Testis (tissue), 5 donors: ENCODE measurements at regions of chr10 and their contacts with region 1.

Region 1: GRCh38 chr10:71771821-71772617 is 1.3 kb downstream of the VSIR start:
- DNase-seq: peak; percentile 50
- H3K4me3 ChIP-seq: peak overlapping the region; percentile 54 to 63
- H3K27ac ChIP-seq: peak overlapping the region; percentile 79 to 82
- H3K4me1 ChIP-seq: peaks cover 48% of the 10 kb centered on the region
- H3K27me3 ChIP-seq: no peaks in the 10 kb centered on the region
- CTCF ChIP-seq: no peak
- POLR2A ChIP-seq: no peak

Region 2: GRCh38 chr10:71527135-71527534 is 244.9 kb before region 1 on chr10:
- intact Hi-C with region 1: no loop called
- DNase-seq: peak; percentile 92
- H3K4me3 ChIP-seq: no peak overlapping the region
- H3K27ac ChIP-seq: no peak overlapping the region
- H3K4me1 ChIP-seq: peaks cover 12% of the 10 kb centered on the region
- H3K27me3 ChIP-seq: no peaks in the 10 kb centered on the region
- CTCF ChIP-seq: no peak
- POLR2A ChIP-seq: no peak

Region 3: DNA sequence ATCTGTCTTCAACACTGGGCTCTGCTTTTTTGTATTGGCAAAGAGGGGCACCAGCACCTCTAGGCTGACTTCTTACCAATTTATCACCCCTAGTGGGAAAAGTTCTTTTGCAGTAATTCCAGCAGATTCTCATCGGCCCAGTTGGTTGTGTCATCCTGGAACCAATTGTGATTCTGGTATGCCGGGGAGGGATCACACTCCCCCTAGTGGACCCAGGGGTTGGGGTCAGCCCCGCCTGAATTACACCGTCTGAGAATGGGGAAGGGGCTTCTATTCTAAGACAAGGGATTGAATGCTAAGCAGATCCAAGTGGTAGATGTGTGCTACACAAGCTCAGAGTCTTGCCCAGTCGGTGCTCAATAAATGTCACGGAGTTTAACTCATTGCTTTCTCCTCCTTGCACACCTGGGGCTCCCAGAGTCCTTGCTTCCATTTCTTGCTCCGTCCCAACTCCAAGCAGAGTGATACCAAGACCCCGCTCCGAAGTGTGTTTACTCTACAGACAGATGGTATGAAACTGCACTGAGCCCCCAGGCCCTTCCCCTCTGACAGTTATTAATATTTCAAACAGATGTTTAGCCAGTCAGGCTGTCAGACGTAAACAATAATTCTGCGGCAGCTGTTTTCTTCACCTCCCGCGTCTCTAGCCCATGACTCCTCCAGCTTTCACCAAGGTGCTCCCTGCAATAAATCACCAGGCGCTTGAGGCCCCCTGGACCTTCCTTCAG is 124.3 kb before region 1 on chr10:
- intact Hi-C with region 1: no loop called
- DNase-seq: no peak
- H3K4me3 ChIP-seq: no peak overlapping the region
- H3K27ac ChIP-seq: no peak overlapping the region
- H3K4me1 ChIP-seq: no peaks in the 10 kb centered on the region
- H3K27me3 ChIP-seq: no peaks in the 10 kb centered on the region
- CTCF ChIP-seq: peak in 1 of 3 experiments; percentile 13
- POLR2A ChIP-seq: no peak

Region 4: DNA sequence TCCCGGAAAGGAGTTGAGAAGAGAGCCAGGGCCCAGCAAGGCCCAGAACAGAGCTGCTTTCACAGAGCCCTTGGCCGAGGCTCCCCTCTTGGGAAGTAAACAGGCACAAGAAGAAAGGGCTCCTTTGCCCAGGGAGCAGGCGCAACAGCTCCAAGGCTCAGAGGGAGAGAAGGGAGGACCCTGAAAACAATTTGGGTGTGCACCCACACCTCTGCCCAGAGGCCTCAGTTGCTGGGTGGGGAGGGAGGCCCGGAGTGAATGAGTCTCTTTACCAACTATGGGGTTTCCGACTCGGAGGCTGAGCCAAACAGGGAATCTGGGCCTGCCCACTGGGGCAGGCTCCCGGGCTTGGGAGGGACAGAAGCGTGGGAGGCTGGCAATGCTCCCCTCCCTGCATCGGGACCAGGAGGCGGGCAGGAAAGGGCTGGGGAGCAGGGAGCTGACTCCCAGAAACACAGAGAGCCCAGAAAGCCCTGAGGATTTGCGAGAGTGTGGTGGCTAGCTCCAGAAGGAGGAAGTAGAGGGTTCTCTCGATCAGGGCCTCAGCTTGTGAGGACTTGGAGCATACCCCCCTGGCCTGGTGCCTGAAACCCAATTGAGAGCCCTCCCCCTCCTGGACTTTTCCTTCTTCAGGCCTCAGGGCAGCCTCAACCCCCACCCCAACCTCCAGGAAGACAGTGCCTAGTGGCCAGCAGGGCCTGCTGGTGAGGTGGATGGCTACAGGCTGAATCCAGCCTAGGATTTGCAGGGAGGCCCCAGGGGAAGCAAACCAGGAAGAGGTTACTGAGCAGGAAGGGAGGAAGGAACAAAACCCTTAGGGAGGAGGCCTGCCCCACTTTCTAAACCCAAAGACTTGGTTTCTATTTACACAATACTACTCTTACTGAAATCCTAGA is 58.6 kb before region 1 on chr10:
- intact Hi-C with region 1: loop called (anchors 10 kb)
- DNase-seq: peak; percentile 80
- H3K4me3 ChIP-seq: no peak overlapping the region
- H3K27ac ChIP-seq: peak overlapping the region; percentile 74 to 83
- H3K4me1 ChIP-seq: peaks cover 38% of the 10 kb centered on the region
- H3K27me3 ChIP-seq: no peaks in the 10 kb centered on the region
- CTCF ChIP-seq: no peak
- POLR2A ChIP-seq: no peak

Region 5: DNA sequence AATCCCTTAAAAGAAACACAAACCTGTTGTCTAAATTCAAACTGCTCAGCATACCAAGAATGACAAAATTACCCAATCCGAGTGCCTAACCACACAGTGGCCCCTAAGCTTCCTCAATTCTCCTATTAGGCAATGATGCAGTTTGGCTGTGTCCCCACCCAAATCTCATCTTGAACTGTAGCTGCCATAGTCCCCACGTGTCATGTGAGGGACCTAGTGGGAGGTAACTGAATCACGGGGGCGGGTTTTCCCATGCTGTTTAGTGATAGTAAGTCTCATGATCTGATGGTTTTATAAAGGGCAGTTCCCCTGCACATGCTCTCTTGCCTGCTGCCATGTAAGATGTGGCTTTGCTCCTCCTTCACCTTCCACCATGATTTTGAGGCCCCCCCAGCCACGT is 57.2 kb after region 1 on chr10:
- intact Hi-C with region 1: no loop called
- DNase-seq: no peak
- H3K4me3 ChIP-seq: no peak overlapping the region
- H3K27ac ChIP-seq: no peak overlapping the region
- H3K4me1 ChIP-seq: no peaks in the 10 kb centered on the region
- H3K27me3 ChIP-seq: no peaks in the 10 kb centered on the region
- CTCF ChIP-seq: no peak
- POLR2A ChIP-seq: no peak

Region 6: DNA sequence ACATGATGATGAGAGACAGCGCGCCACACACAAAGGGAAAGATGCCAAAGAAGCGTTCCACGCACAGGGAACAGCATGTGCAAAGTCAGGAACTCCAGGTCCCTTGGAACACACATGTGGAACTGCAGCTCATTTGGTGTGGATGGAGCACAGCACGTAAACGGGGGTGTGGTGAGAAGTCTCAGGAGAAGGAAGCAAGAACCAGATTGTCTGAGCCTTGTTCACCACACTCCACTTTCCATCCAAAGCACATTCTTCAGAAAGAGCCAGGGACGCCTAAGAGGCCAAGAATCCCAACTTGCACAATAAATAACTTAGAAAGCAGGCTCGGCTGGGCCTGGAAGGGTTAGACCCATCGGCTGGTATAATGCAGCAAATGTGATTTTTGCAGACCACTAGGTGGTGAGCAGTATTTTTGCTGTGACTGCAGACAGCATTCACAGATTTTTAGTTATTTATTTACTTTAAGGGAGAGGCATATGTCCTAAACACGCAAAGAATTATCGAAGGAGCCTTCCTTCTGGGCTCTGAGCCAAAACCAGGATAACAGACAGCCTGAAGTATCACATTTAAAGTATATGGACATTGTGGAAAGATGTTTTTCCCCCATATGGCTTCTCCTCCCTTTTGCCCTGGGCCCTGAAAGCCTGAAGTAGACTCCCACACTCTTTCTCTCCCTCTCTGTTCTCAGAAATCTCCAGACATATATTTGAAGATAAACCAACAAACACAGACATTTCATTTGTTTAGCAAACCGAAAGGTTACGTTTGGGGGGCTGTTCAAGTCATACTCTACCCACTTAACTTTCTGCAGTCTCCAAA is 472.0 kb after region 1 on chr10:
- intact Hi-C with region 1: no loop called
- DNase-seq: peak; percentile 65
- H3K4me3 ChIP-seq: no peak overlapping the region
- H3K27ac ChIP-seq: peak overlapping the region; percentile 73 to 90
- H3K4me1 ChIP-seq: peaks cover 71% of the 10 kb centered on the region
- H3K27me3 ChIP-seq: no peaks in the 10 kb centered on the region
- CTCF ChIP-seq: peak in 2 of 3 experiments; percentile 10 to 13
- POLR2A ChIP-seq: no peak